Activated T-helper 2 cell treated with anti-CD3 and anti-CD28 coated beads, Interferon-gamma antibody, Interleukin-2, Interleukin-4, amounts not matched to agents 10 μg/mL and 5 μg/mL and 100 μg/mL, durations not matched to agents 14 hours and 24 hours and 36 hours (primary cell): ENCODE measurements at regions of chr9 and their contacts with region 1.

Region 1: DNA sequence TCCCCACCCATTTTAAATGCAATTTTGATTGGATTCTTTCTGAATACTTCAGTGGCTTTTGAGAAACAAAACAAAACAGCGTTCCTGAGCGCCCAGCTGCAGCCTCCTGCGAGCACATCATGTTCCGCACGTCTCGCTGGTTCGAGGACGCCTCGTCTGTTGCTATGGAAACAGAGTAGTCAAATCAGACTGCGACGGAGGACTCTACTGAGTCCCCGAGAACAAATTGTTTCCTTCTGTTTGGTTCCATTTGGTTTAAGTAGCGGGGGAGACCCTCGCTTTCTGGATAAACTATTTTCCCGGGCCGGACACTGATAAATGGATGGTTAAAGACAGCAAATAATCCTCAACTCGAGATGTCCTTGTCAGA is 69.0 kb downstream of the SLC28A3 start:
- DNase-seq: peak; percentile 45
- H3K4me3 Mint-ChIP-seq: peak overlapping the region; percentile 80
- H3K27ac Mint-ChIP-seq: peak overlapping the region; percentile 66
- H3K4me1 Mint-ChIP-seq: peaks cover 23% of the 10 kb centered on the region
- H3K27me3 Mint-ChIP-seq: peaks cover 4% of the 10 kb centered on the region

Region 2: DNA sequence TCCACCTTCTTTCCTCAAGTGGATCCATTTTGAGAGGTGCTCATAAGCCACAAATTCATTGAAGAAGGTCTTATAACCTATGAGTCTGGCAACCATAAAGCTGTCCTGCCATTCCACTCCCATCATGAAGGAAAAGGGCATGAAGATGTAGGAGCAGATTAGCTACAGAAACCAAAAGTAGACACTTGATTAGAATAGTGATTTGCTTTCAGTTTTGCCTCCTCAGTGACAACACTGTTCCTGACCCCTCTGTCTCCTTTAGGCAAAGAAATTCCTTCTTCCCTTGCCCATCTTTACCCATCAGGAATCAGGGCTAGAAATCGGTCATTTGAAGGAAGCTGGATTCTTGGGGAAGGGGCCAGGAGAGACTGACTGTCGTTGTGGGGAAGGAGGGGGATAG is 13.9 kb after region 1 on chr9:
- intact Hi-C with region 1: no loop called
- DNase-seq: no peak
- H3K4me3 Mint-ChIP-seq: no peak overlapping the region
- H3K27ac Mint-ChIP-seq: peak overlapping the region; percentile 48
- H3K4me1 Mint-ChIP-seq: peaks cover 11% of the 10 kb centered on the region
- H3K27me3 Mint-ChIP-seq: no peaks in the 10 kb centered on the region

Region 3: DNA sequence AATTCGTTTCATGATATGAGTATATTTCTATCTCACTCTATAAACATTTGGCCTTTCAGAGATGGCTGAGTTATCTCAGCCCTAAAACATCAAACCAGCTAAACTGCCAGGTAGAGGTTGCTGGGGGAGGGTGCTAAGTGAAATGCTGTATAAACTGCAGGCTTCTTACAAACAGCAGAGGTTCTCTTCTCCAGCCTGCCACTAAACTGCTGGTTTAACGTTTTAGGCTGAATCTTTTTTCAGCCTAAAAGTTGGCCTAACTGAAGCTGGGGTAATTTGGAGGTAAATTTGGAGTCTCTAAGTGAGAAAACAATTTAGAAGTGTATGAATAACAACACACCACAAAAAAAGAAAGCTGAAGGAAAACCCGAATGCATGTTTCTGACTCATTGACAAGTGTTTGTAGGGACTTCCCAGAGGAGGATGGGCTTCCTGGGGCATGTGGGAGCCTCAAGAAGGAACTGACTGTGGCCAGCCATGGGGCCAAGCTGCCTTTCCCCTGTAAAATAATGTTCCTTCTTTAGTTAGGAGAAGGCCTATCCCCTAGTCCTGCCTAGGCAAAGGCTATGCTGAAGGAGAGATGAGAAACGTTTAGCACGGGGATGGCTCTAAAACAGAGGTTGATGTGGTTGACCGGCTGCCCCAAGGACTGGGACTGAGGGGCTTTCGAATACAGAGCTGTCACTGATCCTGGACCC is 24.8 kb after region 1 on chr9:
- intact Hi-C with region 1: loop called (anchors 2 kb)
- DNase-seq: peak; percentile 23
- H3K4me3 Mint-ChIP-seq: peak overlapping the region; percentile 44
- H3K27ac Mint-ChIP-seq: peak overlapping the region; percentile 98
- H3K4me1 Mint-ChIP-seq: peaks cover 48% of the 10 kb centered on the region
- H3K27me3 Mint-ChIP-seq: no peaks in the 10 kb centered on the region

Region 4: GRCh38 chr9:84785792-84786547 is 514.5 kb after region 1 on chr9:
- intact Hi-C with region 1: no loop called
- DNase-seq: no peak
- H3K4me3 Mint-ChIP-seq: no peak overlapping the region
- H3K27ac Mint-ChIP-seq: no peak overlapping the region
- H3K4me1 Mint-ChIP-seq: no peaks in the 10 kb centered on the region
- H3K27me3 Mint-ChIP-seq: peaks cover 6% of the 10 kb centered on the region

Region 5: DNA sequence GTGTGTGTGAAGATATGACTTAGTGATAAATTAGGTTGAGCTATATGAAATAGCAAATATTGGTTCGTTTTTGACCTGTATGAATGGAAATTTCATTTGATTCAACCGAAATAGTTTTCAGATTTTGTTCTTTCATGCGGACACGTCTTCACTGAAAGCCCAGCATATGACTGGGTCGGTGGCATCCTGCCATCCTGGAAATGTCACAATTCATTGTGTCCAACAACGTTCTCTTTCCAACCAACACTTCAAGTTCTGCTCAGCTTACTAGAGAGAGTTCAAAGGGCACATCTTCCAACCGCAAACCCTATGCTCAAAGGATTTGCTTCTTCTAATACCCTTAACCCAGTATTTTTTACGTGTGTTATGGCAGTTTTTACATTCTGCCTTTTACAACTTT is 650.5 kb after region 1 on chr9:
- intact Hi-C with region 1: no loop called
- DNase-seq: no peak
- H3K4me3 Mint-ChIP-seq: no peak overlapping the region
- H3K27ac Mint-ChIP-seq: no peak overlapping the region
- H3K4me1 Mint-ChIP-seq: no peaks in the 10 kb centered on the region
- H3K27me3 Mint-ChIP-seq: no peaks in the 10 kb centered on the region